Right lobe of liver (tissue), 6 donors: ENCODE measurements at regions of chr10 and their contacts with region 1.

Region 1: GRCh38 chr10:96229568-96230030 is 41.8 kb downstream of the BLNK start:
- DNase-seq: peak; percentile 83 to 86 (median 86)
- ATAC-seq: peak; percentile 93 to 98 (median 94)
- H3K4me3 ChIP-seq: no peak overlapping the region
- H3K27ac ChIP-seq: no peak overlapping the region
- H3K4me1 ChIP-seq: peaks cover 0 to 4% (median 0%) of the 10 kb centered on the region in 4 donors
- H3K27me3 ChIP-seq: no peaks in the 10 kb centered on the region
- CTCF ChIP-seq: peak; percentile 64 to 95 (median 67)
- POLR2A ChIP-seq: peak; percentile 10

Region 2: GRCh38 chr10:95976362-95977229 is 253.0 kb before region 1 on chr10:
- intact Hi-C with region 1: no loop called
- DNase-seq: no peak
- ATAC-seq: peak in 2 of 4 donors; percentile 63 to 69
- H3K4me3 ChIP-seq: no peak overlapping the region
- H3K27ac ChIP-seq: no peak overlapping the region
- H3K4me1 ChIP-seq: no peaks in the 10 kb centered on the region
- H3K27me3 ChIP-seq: no peaks in the 10 kb centered on the region
- CTCF ChIP-seq: no peak
- POLR2A ChIP-seq: no peak

Region 3: GRCh38 chr10:96299383-96299782 is 69.8 kb after region 1 on chr10:
- intact Hi-C with region 1: loop called (anchors 5 to 10 kb)
- DNase-seq: no peak
- ATAC-seq: no peak
- H3K4me3 ChIP-seq: no peak overlapping the region
- H3K27ac ChIP-seq: no peak overlapping the region
- H3K4me1 ChIP-seq: no peaks in the 10 kb centered on the region
- H3K27me3 ChIP-seq: no peaks in the 10 kb centered on the region
- CTCF ChIP-seq: no peak
- POLR2A ChIP-seq: no peak

Region 4: GRCh38 chr10:96306516-96306915 is 76.9 kb after region 1 on chr10:
- intact Hi-C with region 1: loop called in 1 of 2 experiments (anchors 10 kb)
- DNase-seq: peak; percentile 30 to 56 (median 48)
- ATAC-seq: peak in 3 of 4 donors; percentile 56 to 69 (median 60)
- H3K4me3 ChIP-seq: no peak overlapping the region
- H3K27ac ChIP-seq: no peak overlapping the region
- H3K4me1 ChIP-seq: no peaks in the 10 kb centered on the region
- H3K27me3 ChIP-seq: no peaks in the 10 kb centered on the region
- CTCF ChIP-seq: no peak
- POLR2A ChIP-seq: no peak

Region 5: DNA sequence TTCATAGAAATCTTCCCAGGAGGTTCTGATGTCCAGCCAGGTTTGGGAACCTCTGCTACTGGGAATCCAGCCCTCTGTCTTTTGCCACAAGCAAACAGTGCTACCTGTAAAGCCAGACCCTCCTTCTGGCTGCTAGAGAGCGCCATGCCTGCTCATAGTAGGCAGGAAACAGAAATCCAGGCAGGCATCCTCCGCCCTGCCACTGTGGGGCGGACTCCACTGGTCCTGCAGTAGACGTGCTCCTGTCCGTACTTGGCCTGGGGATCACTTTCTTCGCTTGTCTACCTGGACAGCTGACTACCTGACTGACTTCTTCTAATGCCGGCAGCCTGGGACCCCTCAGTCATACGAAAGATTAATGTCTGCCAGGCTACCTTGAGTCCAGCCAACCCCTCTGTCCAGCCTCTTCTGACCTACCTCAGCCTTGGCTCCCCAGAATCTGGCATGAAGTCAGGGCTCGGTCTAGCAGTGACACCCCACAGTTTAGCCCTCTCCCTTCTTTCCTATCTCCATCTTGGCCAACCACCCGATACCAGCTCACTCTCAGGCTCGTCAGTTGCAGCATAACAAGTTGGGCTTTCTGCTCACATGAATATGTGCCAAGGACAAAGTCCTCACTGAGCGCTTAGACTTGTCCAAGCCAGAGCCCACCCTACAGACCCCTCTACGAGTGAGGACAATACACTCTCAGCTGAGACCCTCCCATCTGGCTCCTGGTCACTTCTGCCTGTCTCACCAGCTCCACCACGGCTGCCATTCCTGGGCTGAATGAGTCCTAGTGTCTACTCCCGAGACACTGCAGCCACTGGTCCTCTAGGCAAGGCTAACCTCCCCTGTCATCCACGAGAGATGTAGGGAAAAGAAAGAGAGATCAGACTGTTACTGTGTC is 173.1 kb after region 1 on chr10:
- intact Hi-C with region 1: no loop called
- DNase-seq: no peak
- ATAC-seq: no peak
- H3K4me3 ChIP-seq: no peak overlapping the region
- H3K27ac ChIP-seq: no peak overlapping the region
- H3K4me1 ChIP-seq: no peaks in the 10 kb centered on the region
- H3K27me3 ChIP-seq: no peaks in the 10 kb centered on the region
- CTCF ChIP-seq: no peak
- POLR2A ChIP-seq: no peak